Adrenal gland (tissue), 19 donors: ENCODE measurements at regions of chr5 and their contacts with region 1.

Region 1: DNA sequence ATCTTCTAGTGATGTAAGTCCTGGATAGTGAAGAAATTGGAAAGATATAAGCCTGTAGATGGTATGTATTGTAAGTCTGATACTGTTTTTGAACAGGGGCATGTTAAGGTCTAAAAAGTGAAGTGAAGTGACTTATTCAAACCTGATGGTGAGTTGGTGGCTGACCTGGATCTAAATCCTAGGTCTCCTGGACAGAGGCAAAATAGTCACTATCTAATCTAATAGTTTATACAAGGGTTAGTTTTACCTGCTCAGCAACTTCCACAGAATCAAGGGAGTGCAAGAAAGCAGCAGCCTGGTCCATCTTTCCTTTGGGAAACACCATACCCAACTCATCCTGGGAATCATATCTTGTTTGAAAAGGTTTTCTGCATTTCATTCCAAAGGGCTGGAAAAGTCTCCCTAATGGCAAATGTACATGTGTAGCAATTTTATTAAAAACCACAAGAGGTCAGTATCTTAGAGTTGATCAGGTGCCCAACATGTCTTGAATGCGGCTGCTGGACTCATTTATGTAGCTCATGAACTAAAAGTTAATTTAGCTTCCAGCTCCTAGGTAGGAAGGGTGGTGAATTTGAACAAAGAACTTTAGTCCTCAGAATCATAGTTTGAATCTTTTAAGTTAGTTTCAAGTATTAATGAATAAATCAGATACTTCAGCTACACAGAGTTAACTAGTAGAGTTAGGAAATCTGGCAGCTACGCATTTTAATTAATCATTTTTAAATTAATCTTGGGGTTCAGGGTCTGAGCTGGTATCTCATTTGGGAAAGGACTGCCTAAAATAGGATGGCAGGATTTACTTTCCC is 26.0 kb downstream of the SKP2 start:
- DNase-seq: peak in 3 of 7 donors; percentile 27 to 39 (median 37)
- H3K4me3 ChIP-seq: no peak overlapping the region
- H3K27ac ChIP-seq: no peak overlapping the region
- H3K4me1 ChIP-seq: peaks cover 0 to 9% of the 10 kb centered on the region in 2 donors
- H3K27me3 ChIP-seq: no peaks in the 10 kb centered on the region
- CTCF ChIP-seq: peak; percentile 48 to 68 (median 57)
- POLR2A ChIP-seq: no peak

Region 2: GRCh38 chr5:34743878-34744277 is 1434.0 kb before region 1 on chr5:
- intact Hi-C with region 1: no loop called
- DNase-seq: peak in 1 of 7 donors; percentile 40
- H3K4me3 ChIP-seq: no peak overlapping the region
- H3K27ac ChIP-seq: no peak overlapping the region
- H3K4me1 ChIP-seq: no peaks in the 10 kb centered on the region
- H3K27me3 ChIP-seq: no peaks in the 10 kb centered on the region
- CTCF ChIP-seq: no peak
- POLR2A ChIP-seq: no peak

Region 3: GRCh38 chr5:35543408-35543807 is 634.5 kb before region 1 on chr5:
- intact Hi-C with region 1: no loop called
- DNase-seq: no peak
- H3K4me3 ChIP-seq: no peak overlapping the region
- H3K27ac ChIP-seq: no peak overlapping the region
- H3K4me1 ChIP-seq: no peaks in the 10 kb centered on the region
- H3K27me3 ChIP-seq: no peaks in the 10 kb centered on the region
- CTCF ChIP-seq: no peak
- POLR2A ChIP-seq: no peak

Region 4: DNA sequence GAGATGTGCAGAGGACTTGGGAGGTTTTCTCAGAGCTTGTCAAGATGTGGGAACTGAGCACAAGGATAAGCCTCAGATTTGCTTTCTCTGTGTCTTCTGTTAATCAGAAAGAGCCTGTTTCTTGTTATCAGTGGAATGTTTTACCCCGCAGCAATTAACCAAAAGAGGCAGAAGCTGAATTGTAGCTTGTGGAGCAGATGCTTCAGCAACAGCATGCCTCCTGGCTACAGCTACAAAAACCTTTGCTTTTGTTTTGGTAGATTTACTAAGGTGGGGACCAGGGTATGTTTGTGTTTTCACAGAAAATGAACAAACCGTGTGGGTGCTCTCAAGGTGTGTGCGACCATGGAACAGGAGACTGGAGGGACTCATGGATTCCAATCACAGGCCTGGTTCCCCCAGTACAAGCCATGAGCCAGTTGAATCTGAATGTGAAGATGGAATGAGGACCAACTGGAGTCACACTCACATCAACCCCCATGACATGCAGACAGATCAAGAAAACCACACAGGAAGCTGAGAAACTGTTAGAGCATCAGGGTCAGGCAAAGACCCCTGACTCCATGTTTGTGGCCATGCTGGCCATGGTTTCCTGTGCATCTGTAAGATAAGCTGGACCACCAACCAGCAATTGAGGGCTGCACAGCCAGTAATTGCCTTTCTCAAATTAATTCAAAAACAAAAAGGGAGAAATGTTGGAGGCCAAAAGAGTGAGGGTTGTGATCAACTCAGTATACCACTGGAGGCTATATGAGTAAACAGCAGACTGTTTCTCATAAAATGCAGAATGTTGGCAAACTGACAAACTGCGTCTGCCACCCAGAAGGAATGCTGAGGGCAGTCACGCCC is 118.1 kb before region 1 on chr5:
- intact Hi-C with region 1: no loop called
- DNase-seq: no peak
- H3K4me3 ChIP-seq: no peak overlapping the region
- H3K27ac ChIP-seq: no peak overlapping the region
- H3K4me1 ChIP-seq: no peaks in the 10 kb centered on the region
- H3K27me3 ChIP-seq: no peaks in the 10 kb centered on the region
- CTCF ChIP-seq: no peak
- POLR2A ChIP-seq: no peak

Region 5: DNA sequence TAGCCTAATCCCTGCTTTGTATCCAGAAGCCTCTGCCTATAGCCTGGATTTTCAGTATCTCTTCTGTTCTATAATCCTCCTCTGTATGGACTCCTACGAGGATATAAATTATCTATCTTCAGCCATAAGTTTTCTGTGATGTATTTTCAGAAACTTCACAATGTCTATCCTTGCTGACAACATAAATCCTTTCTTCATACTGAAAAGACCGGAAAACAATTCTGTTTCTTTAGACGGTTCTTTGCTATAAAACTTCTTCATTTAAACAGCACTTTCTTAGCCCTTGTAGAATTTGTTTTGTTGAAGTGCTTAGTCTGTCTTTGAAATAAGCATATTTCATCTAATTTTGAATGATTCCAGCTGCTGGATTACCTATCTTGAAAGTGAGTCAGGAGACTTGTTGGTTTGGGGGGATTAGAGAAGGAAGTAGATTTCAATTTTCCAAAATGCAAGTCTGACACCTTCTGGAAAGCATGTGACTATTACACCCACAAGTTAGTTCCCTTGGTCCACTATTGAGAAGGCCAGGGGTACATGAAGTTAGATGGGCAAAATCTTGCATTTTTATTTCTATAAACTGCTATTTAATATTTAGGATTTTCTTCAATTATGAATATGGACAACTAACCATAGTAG is 220.1 kb after region 1 on chr5:
- intact Hi-C with region 1: loop called in 1 of 2 experiments (anchors 10 kb)
- DNase-seq: no peak
- H3K4me3 ChIP-seq: no peak overlapping the region
- H3K27ac ChIP-seq: no peak overlapping the region
- H3K4me1 ChIP-seq: no peaks in the 10 kb centered on the region
- H3K27me3 ChIP-seq: no peaks in the 10 kb centered on the region
- CTCF ChIP-seq: peak in 5 of 6 experiments; percentile 22 to 60 (median 52)
- POLR2A ChIP-seq: no peak

Region 6: GRCh38 chr5:36695677-36696673 is 518.1 kb after region 1 on chr5:
- intact Hi-C with region 1: loop called in 1 of 2 experiments (anchors 5 kb)
- DNase-seq: peak; percentile 40 to 79 (median 65)
- H3K4me3 ChIP-seq: no peak overlapping the region
- H3K27ac ChIP-seq: no peak overlapping the region
- H3K4me1 ChIP-seq: peaks cover 0 to 14% of the 10 kb centered on the region in 2 donors
- H3K27me3 ChIP-seq: peaks cover 6% of the 10 kb centered on the region
- CTCF ChIP-seq: peak; percentile 54 to 63 (median 58)
- POLR2A ChIP-seq: no peak